CD4-positive, alpha-beta T cell (primary cell): ENCODE measurements at regions of chr1 and their contacts with region 1.

Region 1: GRCh38 chr1:84573967-84574842 is at the start of gene CTBS:
- DNase-seq: peak; percentile 74 to 94 (median 83)
- ATAC-seq: peak; percentile 88
- H3K4me3 ChIP-seq: peak within 1 kb of the TSS; percentile 85
- H3K4me3 Mint-ChIP-seq: peak within 1 kb of the TSS; percentile 99
- H3K27ac ChIP-seq: peak within 1 kb of the TSS; percentile 95 to 97
- H3K27ac Mint-ChIP-seq: peak within 1 kb of the TSS; percentile 100
- H3K4me1 ChIP-seq: peaks cover 22% of the 10 kb centered on the region
- H3K4me1 Mint-ChIP-seq: peaks cover 48% of the 10 kb centered on the region
- H3K27me3 ChIP-seq: peaks cover 0 to 3% of the 10 kb centered on the region in 2 experiments
- H3K27me3 Mint-ChIP-seq: no peaks in the 10 kb centered on the region
- CTCF ChIP-seq: no peak
- total RNA-seq, gene CTBS: 19.4 to 20.0 TPM

Region 2: DNA sequence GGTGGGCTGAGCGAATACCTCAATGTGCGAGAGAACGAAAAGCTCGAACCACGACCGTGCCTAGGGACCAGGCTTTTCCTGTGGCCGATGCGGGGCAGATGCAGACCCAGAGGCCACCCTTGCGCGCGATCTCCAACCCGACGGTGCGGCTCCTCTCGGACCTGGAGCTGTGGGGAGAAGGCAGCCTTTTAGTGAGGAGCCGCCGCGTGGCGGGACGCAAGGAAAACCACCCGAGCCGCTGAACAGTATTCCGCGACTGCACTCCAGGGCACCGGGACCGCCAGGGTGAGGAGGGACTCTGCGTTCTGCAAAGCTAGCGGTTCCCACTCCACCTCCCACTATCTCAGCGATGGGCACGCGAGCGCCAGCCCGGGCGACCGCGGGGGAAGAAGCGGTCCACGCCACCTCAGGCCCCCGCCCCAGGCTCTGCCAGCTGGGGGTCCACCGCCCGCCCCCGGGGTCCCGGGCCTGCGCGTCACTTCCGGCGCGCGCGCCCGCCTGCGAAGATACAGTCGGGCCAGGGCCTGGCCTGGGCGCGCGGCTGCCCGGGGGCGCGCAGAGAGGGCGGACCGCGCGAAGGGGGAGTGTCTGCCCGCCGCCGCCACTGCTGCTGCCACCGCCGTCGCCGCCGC is 496.6 kb before region 1 on chr1:
- CTCF ChIA-PET with region 1: no interaction called
- POLR2A ChIA-PET with region 1: no interaction called
- intact Hi-C with region 1: loop called in 1 of 2 experiments (anchors 5 kb)
- DNase-seq: peak; percentile 32 to 86 (median 60)
- ATAC-seq: peak; percentile 88
- H3K4me3 ChIP-seq: peak overlapping the region; percentile 74
- H3K4me3 Mint-ChIP-seq: peak overlapping the region; percentile 92
- H3K27ac ChIP-seq: no peak overlapping the region
- H3K27ac Mint-ChIP-seq: peak overlapping the region; percentile 63
- H3K4me1 ChIP-seq: peaks cover 11% of the 10 kb centered on the region
- H3K4me1 Mint-ChIP-seq: peaks cover 16% of the 10 kb centered on the region
- H3K27me3 ChIP-seq: no peaks in the 10 kb centered on the region
- H3K27me3 Mint-ChIP-seq: no peaks in the 10 kb centered on the region
- CTCF ChIP-seq: no peak

Region 3: DNA sequence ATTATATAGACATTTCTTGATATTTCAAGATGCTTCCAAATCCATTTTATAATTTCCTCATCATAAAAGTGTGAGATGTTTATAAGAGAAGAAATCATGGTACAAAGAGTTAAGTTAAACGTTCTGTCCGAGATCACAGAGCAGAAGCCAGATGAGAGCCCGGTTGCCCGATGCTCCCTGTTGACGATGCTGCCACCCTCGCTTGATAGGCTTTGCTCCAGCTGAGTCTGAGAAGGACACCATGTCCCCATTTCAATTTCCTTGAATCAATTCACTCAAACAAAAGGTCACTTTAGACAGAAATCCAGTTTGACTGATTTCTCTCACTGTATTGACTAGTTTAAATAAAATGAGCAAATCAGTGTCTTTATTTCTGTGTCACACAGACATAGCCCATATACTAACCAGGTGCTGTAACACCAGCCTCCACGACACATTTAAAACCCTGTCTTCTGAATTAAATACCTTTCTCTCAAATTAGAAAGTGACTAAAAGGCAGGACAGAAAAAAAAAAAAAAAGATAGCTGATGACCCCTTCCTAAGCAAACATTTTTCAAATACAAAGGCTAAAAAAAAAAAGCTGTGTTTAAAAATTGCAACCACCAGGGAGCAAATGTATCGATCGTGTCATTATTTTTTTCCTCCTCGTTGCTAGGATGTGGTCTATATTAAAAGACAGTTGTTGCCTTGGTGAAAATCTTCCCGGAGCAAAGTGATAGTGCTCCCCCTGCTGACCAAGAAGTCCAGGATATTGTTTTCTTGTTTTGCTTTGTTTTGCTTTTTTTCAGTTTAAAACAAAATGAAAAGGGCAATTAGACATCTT is 140.7 kb before region 1 on chr1:
- CTCF ChIA-PET with region 1: no interaction called
- POLR2A ChIA-PET with region 1: interaction called, 11 read pairs
- intact Hi-C with region 1: no loop called
- DNase-seq: peak in 12 of 14 experiments; percentile 21 to 91 (median 40)
- ATAC-seq: peak; percentile 79
- H3K4me3 ChIP-seq: peak overlapping the region; percentile 32
- H3K4me3 Mint-ChIP-seq: peak overlapping the region; percentile 68
- H3K27ac ChIP-seq: peak overlapping the region in 1 of 2 donors; percentile 39
- H3K27ac Mint-ChIP-seq: no peak overlapping the region
- H3K4me1 ChIP-seq: peaks cover 25% of the 10 kb centered on the region
- H3K4me1 Mint-ChIP-seq: peaks cover 11% of the 10 kb centered on the region
- H3K27me3 ChIP-seq: no peaks in the 10 kb centered on the region
- H3K27me3 Mint-ChIP-seq: no peaks in the 10 kb centered on the region
- CTCF ChIP-seq: peak; percentile 85

Region 4: GRCh38 chr1:84478876-84479868 is 95.0 kb before region 1 on chr1 and contains the start of gene RPF1:
- CTCF ChIA-PET with region 1: no interaction called
- POLR2A ChIA-PET with region 1: interaction called, 63 read pairs
- intact Hi-C with region 1: loop called in 1 of 2 experiments (anchors 2 kb)
- DNase-seq: peak; percentile 58 to 91 (median 74)
- ATAC-seq: peak; percentile 93
- H3K4me3 ChIP-seq: peak within 1 kb of the TSS; percentile 84
- H3K4me3 Mint-ChIP-seq: peak within 1 kb of the TSS; percentile 97
- H3K27ac ChIP-seq: peak within 1 kb of the TSS; percentile 82 to 85
- H3K27ac Mint-ChIP-seq: peak within 1 kb of the TSS; percentile 95
- H3K4me1 ChIP-seq: peaks cover 13% of the 10 kb centered on the region
- H3K4me1 Mint-ChIP-seq: peaks cover 53% of the 10 kb centered on the region
- H3K27me3 ChIP-seq: peaks cover 3 to 12% of the 10 kb centered on the region in 2 experiments
- H3K27me3 Mint-ChIP-seq: peaks cover 33% of the 10 kb centered on the region
- CTCF ChIP-seq: no peak
- total RNA-seq, gene RPF1: 67.6 to 69.4 TPM

Region 5: DNA sequence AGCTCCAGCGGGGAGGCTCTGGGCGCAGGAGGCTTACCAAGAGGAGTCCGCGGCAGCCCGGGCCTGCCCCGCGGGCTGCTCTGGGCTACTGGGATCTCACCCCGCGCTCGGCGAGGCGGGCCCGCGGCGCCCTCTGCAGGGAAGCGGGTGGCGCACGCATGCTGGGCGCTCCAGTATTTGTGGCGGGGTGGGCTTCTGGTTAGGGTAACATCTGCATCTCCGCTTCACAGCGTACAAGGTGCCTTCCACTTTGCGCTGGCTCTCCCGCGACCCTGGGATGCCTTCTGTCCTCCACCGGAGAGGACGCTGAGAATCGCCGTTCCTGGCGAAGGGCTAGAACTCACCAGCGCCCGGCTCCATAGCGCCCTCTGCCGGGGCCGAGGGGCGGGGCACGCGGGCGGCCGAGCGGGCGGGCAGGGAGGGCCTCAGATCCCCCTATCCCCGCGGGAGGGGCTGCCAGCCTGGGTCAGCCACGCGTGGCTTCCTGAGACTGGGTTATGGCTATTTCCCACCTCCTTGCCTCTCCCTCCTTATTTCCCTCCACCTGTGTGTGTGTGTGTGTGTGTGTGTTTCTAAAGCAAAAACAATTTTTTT is 46.6 kb after region 1 on chr1:
- CTCF ChIA-PET with region 1: interaction called, 10 read pairs
- POLR2A ChIA-PET with region 1: interaction called, 3 read pairs
- intact Hi-C with region 1: loop called (anchors 1 to 2 kb)
- DNase-seq: peak; percentile 50 to 88 (median 74)
- ATAC-seq: peak; percentile 92
- H3K4me3 ChIP-seq: peak overlapping the region; percentile 64
- H3K4me3 Mint-ChIP-seq: peak overlapping the region; percentile 95
- H3K27ac ChIP-seq: no peak overlapping the region
- H3K27ac Mint-ChIP-seq: no peak overlapping the region
- H3K4me1 ChIP-seq: peaks cover 8% of the 10 kb centered on the region
- H3K4me1 Mint-ChIP-seq: peaks cover 12% of the 10 kb centered on the region
- H3K27me3 ChIP-seq: no peaks in the 10 kb centered on the region
- H3K27me3 Mint-ChIP-seq: no peaks in the 10 kb centered on the region
- CTCF ChIP-seq: peak; percentile 100